ENCODE measurements at regions of chr15 and their contacts with region 1.

Region 1: DNA sequence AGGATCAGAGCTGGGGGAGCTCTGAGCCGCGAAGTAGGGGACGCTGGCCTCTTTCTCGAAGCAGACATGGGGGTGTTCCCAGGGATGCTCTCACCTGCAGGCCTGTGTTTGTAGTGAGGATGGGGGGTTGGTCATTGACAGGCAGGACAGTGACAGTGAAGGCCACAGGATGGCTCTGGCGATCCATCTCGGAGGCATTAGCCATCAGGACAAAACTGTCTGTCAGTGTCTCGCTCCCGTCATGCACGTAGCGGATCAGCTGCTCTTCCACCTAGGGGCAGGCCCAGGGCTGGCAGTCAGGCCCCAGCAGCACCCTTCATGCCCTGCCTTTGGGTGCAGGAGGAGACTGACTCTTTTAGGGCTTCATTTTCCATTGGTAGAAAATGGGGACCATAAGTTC is 28.0 kb downstream of the CSPG4 start:
- DNase-seq: no peak
- H3K4me3 ChIP-seq: no peak overlapping the region
- H3K27ac ChIP-seq: peak overlapping the region in 3 of 4 donors; percentile 55 to 99 (median 67)
- H3K4me1 ChIP-seq: peaks cover 0 to 39% (median 28%) of the 10 kb centered on the region in 4 donors
- H3K27me3 ChIP-seq: no peaks in the 10 kb centered on the region
- CTCF ChIP-seq: no peak
- EP300 ChIP-seq: no peak
- POLR2A ChIP-seq: no peak

Region 2: GRCh38 chr15:75508840-75509532 is 175.7 kb before region 1 on chr15:
- intact Hi-C with region 1: loop called (anchors 5 kb)
- DNase-seq: no peak
- H3K4me3 ChIP-seq: no peak overlapping the region
- H3K27ac ChIP-seq: no peak overlapping the region
- H3K4me1 ChIP-seq: no peaks in the 10 kb centered on the region
- H3K27me3 ChIP-seq: no peaks in the 10 kb centered on the region
- CTCF ChIP-seq: peak in 2 of 4 experiments; percentile 32 to 51
- EP300 ChIP-seq: no peak
- POLR2A ChIP-seq: no peak

Region 3: GRCh38 chr15:75639709-75640482 is 44.7 kb before region 1 on chr15 and contains the start of gene IMP3:
- intact Hi-C with region 1: loop called (anchors 5 kb)
- DNase-seq: peak; percentile 98
- H3K4me3 ChIP-seq: peak within 1 kb of the TSS; percentile 76 to 84 (median 81)
- H3K27ac ChIP-seq: peak within 1 kb of the TSS; percentile 88 to 93 (median 92)
- H3K4me1 ChIP-seq: peaks cover 0 to 41% (median 29%) of the 10 kb centered on the region in 4 donors
- H3K27me3 ChIP-seq: no peaks in the 10 kb centered on the region
- CTCF ChIP-seq: no peak
- EP300 ChIP-seq: peak in 1 of 4 donors; percentile 27
- POLR2A ChIP-seq: peak; percentile 93 to 97
- total RNA-seq, gene IMP3: 55.4 to 117 (median 84.3) TPM

Region 4: GRCh38 chr15:75732809-75733451 is 48.3 kb after region 1 on chr15:
- intact Hi-C with region 1: loop called (anchors 2 kb)
- DNase-seq: peak; percentile 89
- H3K4me3 ChIP-seq: no peak overlapping the region
- H3K27ac ChIP-seq: peak overlapping the region in 3 of 4 donors; percentile 57 to 87 (median 81)
- H3K4me1 ChIP-seq: peaks cover 0 to 57% (median 46%) of the 10 kb centered on the region in 4 donors
- H3K27me3 ChIP-seq: no peaks in the 10 kb centered on the region
- CTCF ChIP-seq: peak; percentile 93 to 98 (median 95)
- EP300 ChIP-seq: no peak
- POLR2A ChIP-seq: no peak

Region 5: GRCh38 chr15:75801859-75802593 is 117.4 kb after region 1 on chr15:
- intact Hi-C with region 1: loop called (anchors 5 kb)
- DNase-seq: peak; percentile 90
- H3K4me3 ChIP-seq: peak overlapping the region in 3 of 4 donors; percentile 13 to 29 (median 27)
- H3K27ac ChIP-seq: no peak overlapping the region
- H3K4me1 ChIP-seq: peaks cover 0 to 9% (median 7%) of the 10 kb centered on the region in 4 donors
- H3K27me3 ChIP-seq: peaks cover 0 to 20% (median 0%) of the 10 kb centered on the region in 3 donors
- CTCF ChIP-seq: peak; percentile 71 to 95 (median 90)
- EP300 ChIP-seq: no peak
- POLR2A ChIP-seq: no peak

Measured in sigmoid colon (tissue), 7 donors.